ENCODE measurements at regions of chr2 and their contacts with region 1.

Region 1: GRCh38 chr2:204072443-204073324 is 136.1 kb downstream of the ICOS start:
- DNase-seq: peak; percentile 91
- H3K4me3 Mint-ChIP-seq: no peak overlapping the region
- H3K27ac Mint-ChIP-seq: peak overlapping the region; percentile 14
- H3K4me1 Mint-ChIP-seq: peaks cover 10% of the 10 kb centered on the region
- H3K27me3 Mint-ChIP-seq: peaks cover 6% of the 10 kb centered on the region

Region 2: DNA sequence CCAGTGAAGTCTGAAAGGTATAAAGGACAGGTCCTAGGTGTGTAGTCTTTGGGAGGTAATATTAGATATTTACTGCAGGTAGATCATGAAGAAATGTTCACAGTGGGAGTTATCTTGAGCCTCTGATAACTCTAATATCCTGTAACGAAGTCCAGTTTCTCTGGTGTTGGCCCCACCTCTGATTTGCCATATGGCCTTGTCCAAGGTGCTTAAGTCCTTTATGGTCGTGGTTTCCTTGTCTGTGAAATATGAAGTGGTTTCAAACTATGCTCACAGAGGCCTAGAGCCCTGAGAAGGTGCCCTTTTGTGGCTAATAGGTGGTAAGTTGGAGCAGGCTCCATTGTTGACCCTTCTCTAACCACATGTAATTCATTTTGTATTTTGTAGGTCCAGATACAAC is 54.6 kb after region 1 on chr2:
- intact Hi-C with region 1: no loop called
- DNase-seq: no peak
- H3K4me3 Mint-ChIP-seq: no peak overlapping the region
- H3K27ac Mint-ChIP-seq: no peak overlapping the region
- H3K4me1 Mint-ChIP-seq: peaks cover 8% of the 10 kb centered on the region
- H3K27me3 Mint-ChIP-seq: peaks cover 14% of the 10 kb centered on the region

Region 3: DNA sequence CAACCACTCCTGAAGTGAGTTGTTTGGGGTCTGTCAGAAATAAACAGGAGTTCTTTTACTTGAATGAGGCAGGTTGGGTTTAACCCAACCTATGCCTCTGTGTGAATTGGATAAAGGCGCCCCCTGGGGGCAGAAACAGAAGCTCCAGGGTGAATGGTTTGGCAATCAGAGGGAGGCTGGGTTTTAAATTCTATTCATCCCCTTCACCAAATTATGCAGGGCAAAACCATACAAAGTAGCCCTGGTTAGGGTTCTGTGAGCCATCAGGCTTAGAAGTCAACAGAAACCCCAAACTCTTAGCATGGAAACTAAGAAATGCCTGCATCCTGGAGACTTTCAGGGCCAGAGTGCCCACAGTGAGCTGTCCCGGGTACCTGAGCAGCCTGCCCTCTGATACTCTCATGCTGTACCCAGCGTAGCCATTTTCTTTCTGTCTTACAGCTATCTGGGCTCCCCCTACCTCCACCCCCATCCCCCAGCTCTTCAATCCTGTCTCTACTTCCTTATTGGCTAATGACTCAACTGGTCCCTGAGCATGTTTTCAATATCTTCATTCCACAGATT is 105.4 kb after region 1 on chr2:
- intact Hi-C with region 1: loop called (anchors 1 kb)
- DNase-seq: peak; percentile 90
- H3K4me3 Mint-ChIP-seq: no peak overlapping the region
- H3K27ac Mint-ChIP-seq: no peak overlapping the region
- H3K4me1 Mint-ChIP-seq: peaks cover 7% of the 10 kb centered on the region
- H3K27me3 Mint-ChIP-seq: peaks cover 32% of the 10 kb centered on the region

Region 4: GRCh38 chr2:204260162-204260877 is 187.6 kb after region 1 on chr2:
- intact Hi-C with region 1: loop called (anchors 5 kb)
- DNase-seq: peak; percentile 80
- H3K4me3 Mint-ChIP-seq: no peak overlapping the region
- H3K27ac Mint-ChIP-seq: no peak overlapping the region
- H3K4me1 Mint-ChIP-seq: no peaks in the 10 kb centered on the region
- H3K27me3 Mint-ChIP-seq: peaks cover 36% of the 10 kb centered on the region

Region 5: GRCh38 chr2:204691911-204692510 is 619.3 kb after region 1 on chr2:
- intact Hi-C with region 1: loop called (anchors 5 kb)
- DNase-seq: peak; percentile 74
- H3K4me3 Mint-ChIP-seq: no peak overlapping the region
- H3K27ac Mint-ChIP-seq: no peak overlapping the region
- H3K4me1 Mint-ChIP-seq: peaks cover 3% of the 10 kb centered on the region
- H3K27me3 Mint-ChIP-seq: peaks cover 8% of the 10 kb centered on the region

Measured in activated CD4-positive, alpha-beta T cell treated with anti-CD3 and anti-CD28 coated beads, Interleukin-2, amount 10 ng/mL, durations not matched to agents 24 days and 14 days (primary cell).